Caco-2 (cell line): ENCODE measurements at regions of chr11 and their contacts with region 1.

Region 1: DNA sequence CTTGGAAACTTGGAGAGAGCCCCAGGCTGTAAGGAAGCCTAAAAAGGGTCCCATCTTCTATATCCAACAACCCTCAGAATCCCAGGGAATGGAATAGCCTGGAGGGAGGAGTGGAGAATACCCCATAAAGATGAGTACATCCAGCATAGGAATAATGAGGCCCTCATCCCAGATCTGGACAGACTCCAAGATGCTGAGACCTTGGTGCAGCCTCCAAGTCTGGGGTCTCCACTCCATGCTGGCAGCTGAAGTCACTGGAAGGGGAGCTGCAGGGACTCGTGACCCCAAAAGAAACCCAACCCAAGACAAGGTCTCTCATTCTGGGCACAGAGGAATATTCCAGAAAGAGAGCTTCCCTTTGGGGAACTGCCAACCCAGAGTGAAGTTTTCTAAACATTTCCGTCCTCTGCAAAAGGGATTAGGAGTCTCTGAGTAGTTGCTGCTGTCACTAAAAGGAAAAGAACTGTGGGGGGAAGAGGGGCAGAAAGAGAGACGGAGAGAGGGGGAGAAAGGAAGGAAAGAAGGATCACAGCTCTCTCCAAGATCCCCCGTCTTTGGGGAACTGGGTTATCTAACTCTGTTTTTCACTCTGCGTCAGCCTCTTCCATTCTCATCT is 589 bp downstream of the SCGB1A1 start:
- DNase-seq: no peak
- H3K4me3 ChIP-seq: no peak overlapping the region
- H3K4me3 Mint-ChIP-seq: no peak overlapping the region
- H3K27ac Mint-ChIP-seq: no peak overlapping the region
- H3K4me1 ChIP-seq: peaks cover 24% of the 10 kb centered on the region
- H3K4me1 Mint-ChIP-seq: peaks cover 30% of the 10 kb centered on the region
- H3K27me3 ChIP-seq: no peaks in the 10 kb centered on the region
- H3K27me3 Mint-ChIP-seq: no peaks in the 10 kb centered on the region
- CTCF ChIP-seq: no peak

Region 2: DNA sequence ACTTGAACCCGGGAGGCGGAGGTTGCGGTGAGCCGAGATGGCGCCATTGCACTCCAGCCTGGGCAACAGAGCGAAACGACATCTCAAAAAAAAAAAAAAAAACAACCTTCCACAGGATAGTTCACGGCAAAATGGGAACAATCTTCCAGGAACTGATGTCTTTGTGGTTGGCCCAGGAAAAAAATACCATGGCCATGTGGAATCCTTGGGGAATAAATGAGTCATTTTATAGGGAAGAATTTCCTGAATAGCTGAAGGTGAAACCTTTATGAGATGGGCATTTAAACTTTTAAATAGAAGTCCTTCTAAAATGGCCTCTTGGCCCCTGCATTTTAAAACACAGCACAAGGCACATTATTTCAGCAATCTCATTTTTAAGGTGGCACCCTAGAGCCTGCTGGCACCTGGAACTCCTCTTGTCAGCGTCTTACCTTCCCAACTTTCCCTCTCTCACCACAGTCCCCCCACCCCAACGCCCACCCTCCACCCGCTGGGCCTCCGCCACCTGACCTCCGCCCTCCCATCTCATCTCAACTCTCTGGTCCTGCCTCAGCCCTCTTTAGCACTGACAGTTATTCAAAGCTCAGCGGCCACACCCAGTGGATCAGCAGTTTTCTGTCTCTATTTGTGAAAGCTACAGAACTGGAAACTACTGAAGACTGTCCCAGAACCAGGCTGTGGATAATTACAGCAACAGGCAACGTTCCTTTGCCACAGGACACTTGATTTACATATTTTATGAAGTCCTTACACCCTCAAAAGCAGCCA is 42.5 kb after region 1 on chr11:
- CTCF ChIA-PET with region 1: interaction called, 28 read pairs
- POLR2A ChIA-PET with region 1: no interaction called
- intact Hi-C with region 1: no loop called
- DNase-seq: no peak
- H3K4me3 ChIP-seq: no peak overlapping the region
- H3K4me3 Mint-ChIP-seq: no peak overlapping the region
- H3K27ac Mint-ChIP-seq: no peak overlapping the region
- H3K4me1 ChIP-seq: peaks cover 56% of the 10 kb centered on the region
- H3K4me1 Mint-ChIP-seq: peaks cover 46% of the 10 kb centered on the region
- H3K27me3 ChIP-seq: no peaks in the 10 kb centered on the region
- H3K27me3 Mint-ChIP-seq: no peaks in the 10 kb centered on the region
- CTCF ChIP-seq: no peak

Region 3: DNA sequence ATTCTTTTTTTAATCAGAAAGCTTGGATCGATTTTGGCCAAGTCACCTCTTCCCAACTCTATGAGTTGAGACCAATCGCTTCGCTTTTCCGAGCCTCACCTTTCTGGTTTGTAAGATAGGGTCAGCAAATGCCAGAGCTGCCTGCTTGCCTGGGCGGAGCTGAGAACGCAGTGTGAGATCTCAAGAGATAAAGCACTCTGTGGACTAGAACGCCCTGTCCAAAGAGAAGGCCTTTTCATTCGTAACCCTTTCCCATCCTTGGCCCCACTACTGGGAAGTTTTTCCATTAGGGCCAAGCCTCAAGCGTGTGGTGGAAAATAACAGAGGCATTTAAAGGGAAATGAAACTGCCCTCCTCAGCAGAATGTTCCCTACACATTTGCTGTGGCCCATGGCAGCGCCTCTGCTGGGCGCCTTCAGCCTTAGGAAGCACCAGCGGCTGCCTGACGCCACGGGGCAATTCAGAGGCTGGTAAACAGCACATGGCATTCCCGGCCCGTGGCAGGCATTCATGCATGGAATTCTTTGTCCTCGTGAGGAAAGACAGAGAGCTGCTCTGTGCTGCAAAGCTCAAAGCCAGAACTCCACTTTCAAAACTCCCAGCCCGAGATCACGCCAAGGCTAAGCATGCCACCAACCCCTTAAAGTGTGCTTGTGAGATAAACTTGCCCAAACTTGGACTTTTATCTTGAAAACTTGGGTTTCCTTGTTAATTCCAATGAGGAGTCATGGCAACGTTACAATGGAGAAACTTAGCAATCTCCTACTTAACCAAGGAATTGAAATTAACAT is 89.0 kb after region 1 on chr11:
- CTCF ChIA-PET with region 1: interaction called, 11 read pairs
- POLR2A ChIA-PET with region 1: no interaction called
- intact Hi-C with region 1: no loop called
- DNase-seq: peak; percentile 79 to 83
- H3K4me3 ChIP-seq: 0 out of 2 replicates have a peak overlapping the region, but pooled peaks have one; percentile 5
- H3K4me3 Mint-ChIP-seq: peak overlapping the region; percentile 58
- H3K27ac Mint-ChIP-seq: peak overlapping the region; percentile 85
- H3K4me1 ChIP-seq: peaks cover 56% of the 10 kb centered on the region
- H3K4me1 Mint-ChIP-seq: peaks cover 36% of the 10 kb centered on the region
- H3K27me3 ChIP-seq: no peaks in the 10 kb centered on the region
- H3K27me3 Mint-ChIP-seq: no peaks in the 10 kb centered on the region
- CTCF ChIP-seq: peak; percentile 41 to 74